IMR-90 (cell line): ENCODE measurements at regions of chr6 and their contacts with region 1.

Region 1: GRCh38 chr6:151323791-151324487 is 67.4 kb downstream of the ZBTB2 start:
- DNase-seq: peak; percentile 93
- ATAC-seq: peak; percentile 87
- H3K4me3 ChIP-seq: no peak overlapping the region
- H3K27ac ChIP-seq: peak overlapping the region; percentile 7; the same call in 1 of the 2 replicates
- H3K4me1 ChIP-seq: peaks cover 6% of the 10 kb centered on the region; the same call in 1 of the 2 replicates
- H3K27me3 ChIP-seq: no peaks in the 10 kb centered on the region
- CTCF ChIP-seq: peak; percentile 96
- POLR2A ChIP-seq: no peak
- RAD21 ChIP-seq: peak; percentile 96

Region 2: DNA sequence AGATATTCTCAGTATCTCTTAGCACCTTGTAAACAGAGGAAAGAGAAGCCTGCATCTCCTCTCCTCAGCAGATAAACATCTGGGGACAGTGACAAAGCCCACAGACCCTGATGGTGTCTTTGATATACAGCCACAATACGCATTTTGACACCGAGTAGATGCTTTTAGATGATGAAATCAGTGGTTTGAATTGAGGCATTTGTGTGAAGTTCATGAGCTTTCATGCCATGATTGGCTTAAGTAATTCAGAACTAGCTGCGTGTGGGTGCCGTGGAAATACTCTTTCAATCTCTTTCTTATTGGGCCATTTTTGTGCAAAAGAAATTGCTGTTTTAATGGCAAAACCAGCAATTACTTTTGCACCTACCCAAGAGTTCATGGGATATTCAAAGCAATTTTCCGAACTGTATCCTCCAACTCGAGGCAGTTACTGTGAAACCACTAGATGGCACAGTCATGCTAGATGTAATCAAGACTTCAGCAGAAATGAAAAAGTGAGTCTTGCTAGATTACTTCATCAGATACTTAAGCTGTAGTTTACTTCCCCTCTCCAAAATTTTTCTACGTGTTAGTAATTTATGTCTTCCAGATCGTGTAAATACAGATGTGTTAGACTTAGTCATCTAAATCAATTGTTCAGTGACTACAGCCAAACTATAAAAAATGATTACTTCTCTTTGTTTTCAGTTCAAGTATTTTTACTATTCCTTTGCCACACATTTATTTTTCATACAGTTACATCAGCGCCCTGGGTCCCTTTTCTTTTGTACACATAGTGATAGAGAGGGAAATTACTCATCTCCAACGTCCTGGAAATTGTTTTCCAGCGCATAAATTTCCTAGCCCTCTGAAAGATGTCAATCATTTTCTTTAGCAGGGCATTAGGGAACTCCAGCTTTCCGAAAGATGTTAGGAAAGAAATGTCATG is 905.8 kb before region 1 on chr6:
- CTCF ChIA-PET with region 1: interaction called, 3 read pairs
- POLR2A ChIA-PET with region 1: no interaction called
- dilution Hi-C with region 1: no loop called
- in situ Hi-C with region 1: loop called (anchors 25 kb)
- intact Hi-C with region 1: no loop called
- DNase-seq: peak; percentile 84
- ATAC-seq: peak; percentile 88
- H3K4me3 ChIP-seq: no peak overlapping the region
- H3K27ac ChIP-seq: no peak overlapping the region
- H3K4me1 ChIP-seq: no peaks in the 10 kb centered on the region; the same call in 1 of the 2 replicates
- H3K27me3 ChIP-seq: peaks cover 6% of the 10 kb centered on the region
- CTCF ChIP-seq: peak; percentile 76
- POLR2A ChIP-seq: no peak
- RAD21 ChIP-seq: peak; percentile 65

Region 3: GRCh38 chr6:150891888-150892485 is 432.0 kb before region 1 on chr6:
- CTCF ChIA-PET with region 1: interaction called, 55 read pairs
- POLR2A ChIA-PET with region 1: no interaction called
- dilution Hi-C with region 1: no loop called
- in situ Hi-C with region 1: no loop called
- intact Hi-C with region 1: loop called (anchors 2 kb)
- DNase-seq: peak; percentile 88
- ATAC-seq: peak; percentile 83
- H3K4me3 ChIP-seq: no peak overlapping the region
- H3K27ac ChIP-seq: peak overlapping the region; percentile 83; the same call in 1 of the 2 replicates
- H3K4me1 ChIP-seq: peaks cover 13% of the 10 kb centered on the region
- H3K27me3 ChIP-seq: no peaks in the 10 kb centered on the region
- CTCF ChIP-seq: peak; percentile 77
- POLR2A ChIP-seq: no peak
- RAD21 ChIP-seq: peak; percentile 78

Region 4: DNA sequence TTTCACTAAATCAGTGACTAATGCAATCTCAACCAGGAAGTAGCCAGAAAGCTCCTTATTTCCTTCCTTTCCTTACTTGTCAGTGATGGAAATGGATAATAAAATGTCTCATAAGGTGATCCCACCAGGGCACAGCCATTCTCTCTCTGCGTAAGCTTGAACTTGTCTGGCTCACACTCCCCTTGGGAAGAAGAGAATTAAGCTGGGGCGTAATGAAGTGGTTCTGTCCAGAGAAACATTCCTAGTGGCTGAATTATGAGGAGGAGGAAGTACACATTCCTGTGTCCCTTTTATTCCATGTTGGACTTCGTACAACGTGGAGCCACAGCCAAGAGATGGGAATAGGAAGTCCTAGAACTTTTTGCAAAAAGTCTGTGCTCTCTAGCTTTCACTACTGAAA is 364.8 kb before region 1 on chr6:
- CTCF ChIA-PET with region 1: no interaction called
- POLR2A ChIA-PET with region 1: no interaction called
- dilution Hi-C with region 1: no loop called
- in situ Hi-C with region 1: no loop called
- intact Hi-C with region 1: no loop called
- DNase-seq: no peak
- ATAC-seq: no peak; the same call in 1 of the 2 replicates
- H3K4me3 ChIP-seq: no peak overlapping the region
- H3K27ac ChIP-seq: no peak overlapping the region
- H3K4me1 ChIP-seq: no peaks in the 10 kb centered on the region
- H3K27me3 ChIP-seq: no peaks in the 10 kb centered on the region
- CTCF ChIP-seq: no peak
- POLR2A ChIP-seq: no peak
- RAD21 ChIP-seq: no peak

Region 5: DNA sequence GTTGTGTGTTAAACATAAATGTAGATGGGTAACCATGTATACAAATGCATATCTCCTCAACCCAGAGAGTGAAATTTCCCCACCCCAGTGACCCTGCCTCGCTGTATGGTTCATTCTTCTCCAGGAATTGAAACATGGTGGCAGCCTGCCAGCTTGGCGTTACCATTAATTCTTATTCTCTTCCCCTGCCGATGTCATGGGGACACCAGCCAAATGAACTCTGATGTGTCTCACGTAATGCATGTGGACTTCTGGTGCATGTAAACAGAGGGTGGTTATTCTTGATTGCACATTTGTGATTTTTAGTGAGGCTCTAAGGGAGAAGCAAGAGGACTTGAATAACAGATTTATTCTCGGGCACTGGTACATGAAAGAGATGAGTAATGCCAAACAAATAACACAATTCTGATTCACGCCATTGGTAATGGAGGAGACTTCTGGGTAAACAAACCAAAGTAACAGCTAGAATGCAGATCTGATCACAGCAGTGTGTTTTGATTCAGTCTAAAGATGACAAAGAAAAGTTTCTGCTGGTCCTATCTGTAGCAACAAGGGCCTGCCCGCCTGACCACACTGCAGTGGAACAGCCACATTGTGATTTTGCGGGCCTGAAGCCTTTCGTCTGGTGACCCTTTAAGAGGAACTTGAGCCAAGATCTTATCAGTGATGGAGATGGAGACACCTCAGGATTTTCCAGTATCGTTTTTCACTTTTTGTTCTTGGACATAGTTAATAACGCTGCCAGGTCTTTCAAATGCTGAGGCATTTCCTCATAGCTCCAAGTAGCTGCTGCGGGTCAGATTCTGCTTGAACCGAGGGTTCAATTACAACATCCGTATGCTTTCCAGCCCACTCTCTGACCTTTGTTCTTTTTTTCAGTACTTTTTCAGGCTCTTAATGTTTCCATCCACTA is 256.0 kb before region 1 on chr6:
- CTCF ChIA-PET with region 1: interaction called, 19 read pairs
- POLR2A ChIA-PET with region 1: no interaction called
- dilution Hi-C with region 1: no loop called
- in situ Hi-C with region 1: no loop called
- intact Hi-C with region 1: loop called (anchors 1 kb)
- DNase-seq: peak; percentile 97
- ATAC-seq: peak; percentile 72
- H3K4me3 ChIP-seq: no peak overlapping the region
- H3K27ac ChIP-seq: peak overlapping the region; percentile 90
- H3K4me1 ChIP-seq: peaks cover 24% of the 10 kb centered on the region
- H3K27me3 ChIP-seq: no peaks in the 10 kb centered on the region
- CTCF ChIP-seq: no peak
- POLR2A ChIP-seq: no peak; the same call in 1 of the 2 replicates
- RAD21 ChIP-seq: no peak; the same call in 1 of the 2 replicates

Region 6: DNA sequence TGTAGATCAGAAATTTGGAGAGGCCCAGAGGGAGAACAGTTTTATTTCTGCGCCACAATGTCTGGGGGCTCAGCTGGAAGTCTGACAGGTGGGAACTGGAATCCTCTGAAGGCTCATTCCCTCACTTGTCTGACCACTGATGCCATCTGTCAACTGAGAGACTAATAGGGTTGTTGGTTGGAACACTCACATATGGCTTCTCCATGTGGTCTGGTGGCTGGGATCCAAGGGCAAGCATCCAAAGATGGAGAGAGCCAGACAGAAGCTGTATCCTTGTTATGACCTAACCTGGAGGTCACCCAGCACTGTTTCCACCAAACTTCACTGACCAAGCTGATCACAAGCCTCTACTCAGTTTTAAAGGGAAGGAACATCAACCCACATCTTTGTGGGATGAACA is 202.0 kb before region 1 on chr6:
- CTCF ChIA-PET with region 1: interaction called, 5 read pairs
- POLR2A ChIA-PET with region 1: interaction called, 12 read pairs
- dilution Hi-C with region 1: no loop called
- in situ Hi-C with region 1: no loop called
- intact Hi-C with region 1: no loop called
- DNase-seq: no peak
- ATAC-seq: no peak
- H3K4me3 ChIP-seq: no peak overlapping the region
- H3K27ac ChIP-seq: no peak overlapping the region
- H3K4me1 ChIP-seq: peaks cover 3% of the 10 kb centered on the region; the same call in 1 of the 2 replicates
- H3K27me3 ChIP-seq: peaks cover 7% of the 10 kb centered on the region
- CTCF ChIP-seq: no peak
- POLR2A ChIP-seq: no peak
- RAD21 ChIP-seq: no peak